ENCODE measurements at regions of chr15 and their contacts with region 1.

Region 1: DNA sequence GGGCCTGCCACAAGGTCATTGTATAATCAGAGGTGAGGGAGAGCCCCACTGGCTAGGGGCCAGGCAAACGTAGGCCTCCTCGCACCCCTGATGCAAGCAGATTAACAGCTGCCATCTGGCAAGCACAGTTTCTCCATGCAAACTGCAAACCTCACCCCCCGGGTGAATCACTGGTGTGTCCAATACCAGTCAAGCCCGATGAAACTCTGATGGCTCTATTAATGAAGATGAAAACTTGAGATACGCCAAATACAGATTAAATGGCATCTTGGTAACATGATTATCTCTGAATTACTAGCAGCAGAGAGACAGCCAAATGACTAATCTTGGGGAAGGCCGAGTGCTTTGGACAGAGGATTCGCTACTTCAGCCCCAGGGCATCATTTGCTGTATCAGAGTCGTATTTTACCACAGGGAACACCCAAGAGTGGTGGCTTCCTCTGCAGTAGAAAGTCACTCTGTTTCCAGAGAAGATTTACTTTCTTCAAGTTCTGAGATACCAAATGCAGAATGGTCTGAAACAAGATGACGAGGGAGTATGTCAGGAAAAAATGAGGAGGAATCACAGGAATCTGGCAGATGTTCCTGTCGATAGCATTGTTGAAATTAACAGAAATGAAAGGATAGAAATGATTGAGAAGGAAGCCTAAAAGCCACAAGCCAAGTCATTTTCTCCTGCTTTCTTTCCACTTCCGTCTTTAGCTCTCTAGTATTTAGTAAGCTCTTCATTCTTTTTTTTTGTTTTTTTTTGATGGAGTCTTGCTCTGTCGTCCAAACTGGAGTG is 96.2 kb upstream of the NR2F2 start:
- DNase-seq: no peak
- ATAC-seq: no peak
- H3K4me3 ChIP-seq: no peak overlapping the region
- H3K4me3 Mint-ChIP-seq: no peak overlapping the region
- H3K27ac ChIP-seq: no peak overlapping the region
- H3K27ac Mint-ChIP-seq: no peak overlapping the region
- H3K4me1 ChIP-seq: no peaks in the 10 kb centered on the region
- H3K4me1 Mint-ChIP-seq: no peaks in the 10 kb centered on the region
- H3K27me3 ChIP-seq: no peaks in the 10 kb centered on the region
- H3K27me3 Mint-ChIP-seq: peaks cover 0 to under 1% of the 10 kb centered on the region in 2 donors

Region 2: GRCh38 chr15:94677202-94677790 is 1557.0 kb before region 1 on chr15:
- CTCF ChIA-PET with region 1: no interaction called
- POLR2A ChIA-PET with region 1: interaction called in 1 of 2 experiments, 10 read pairs
- DNase-seq: no peak
- ATAC-seq: no peak
- H3K4me3 ChIP-seq: no peak overlapping the region
- H3K4me3 Mint-ChIP-seq: no peak overlapping the region
- H3K27ac ChIP-seq: no peak overlapping the region
- H3K27ac Mint-ChIP-seq: no peak overlapping the region
- H3K4me1 ChIP-seq: no peaks in the 10 kb centered on the region
- H3K4me1 Mint-ChIP-seq: no peaks in the 10 kb centered on the region
- H3K27me3 ChIP-seq: peaks cover 0 to 6% of the 10 kb centered on the region in 2 experiments
- H3K27me3 Mint-ChIP-seq: peaks cover 13 to 27% of the 10 kb centered on the region in 2 donors

Region 3: GRCh38 chr15:96303503-96304056 is 69.3 kb after region 1 on chr15:
- CTCF ChIA-PET with region 1: no interaction called
- POLR2A ChIA-PET with region 1: no interaction called
- DNase-seq: no peak
- ATAC-seq: no peak
- H3K4me3 ChIP-seq: no peak overlapping the region
- H3K4me3 Mint-ChIP-seq: no peak overlapping the region
- H3K27ac ChIP-seq: no peak overlapping the region
- H3K27ac Mint-ChIP-seq: no peak overlapping the region
- H3K4me1 ChIP-seq: no peaks in the 10 kb centered on the region
- H3K4me1 Mint-ChIP-seq: no peaks in the 10 kb centered on the region
- H3K27me3 ChIP-seq: no peaks in the 10 kb centered on the region
- H3K27me3 Mint-ChIP-seq: peaks cover 4 to 5% of the 10 kb centered on the region in 2 donors